ENCODE measurements at regions of chr13 and their contacts with region 1.

Region 1: GRCh38 chr13:51452361-51453206 is at the start of gene INTS6:
- DNase-seq: peak; percentile 99
- ATAC-seq: peak; percentile 78 to 94 (median 81)
- H3K4me3 ChIP-seq: peak within 1 kb of the TSS; percentile 85
- H3K4me3 Mint-ChIP-seq: peak within 1 kb of the TSS; percentile 94
- H3K27ac ChIP-seq: peak within 1 kb of the TSS; percentile 96
- H3K27ac Mint-ChIP-seq: peak within 1 kb of the TSS; percentile 92 to 96
- H3K4me1 ChIP-seq: peaks cover 9% of the 10 kb centered on the region
- H3K4me1 Mint-ChIP-seq: peaks cover 45 to 48% of the 10 kb centered on the region in 2 donors
- H3K27me3 ChIP-seq: no peaks in the 10 kb centered on the region
- H3K27me3 Mint-ChIP-seq: no peaks in the 10 kb centered on the region
- CTCF ChIP-seq: no peak
- total RNA-seq, gene INTS6: 89.2 to 142 (median 110) TPM

Region 2: GRCh38 chr13:51479199-51479523 is 26.6 kb after region 1 on chr13:
- intact Hi-C with region 1: no loop called
- DNase-seq: no peak
- ATAC-seq: no peak
- H3K4me3 ChIP-seq: no peak overlapping the region
- H3K4me3 Mint-ChIP-seq: no peak overlapping the region
- H3K27ac ChIP-seq: no peak overlapping the region
- H3K27ac Mint-ChIP-seq: no peak overlapping the region
- H3K4me1 ChIP-seq: no peaks in the 10 kb centered on the region
- H3K4me1 Mint-ChIP-seq: peaks cover 8 to 9% of the 10 kb centered on the region in 2 donors
- H3K27me3 ChIP-seq: no peaks in the 10 kb centered on the region
- H3K27me3 Mint-ChIP-seq: no peaks in the 10 kb centered on the region
- CTCF ChIP-seq: no peak

Region 3: GRCh38 chr13:51534041-51534817 is 81.6 kb after region 1 on chr13:
- intact Hi-C with region 1: loop called (anchors 5 kb)
- DNase-seq: peak; percentile 45 to 50
- ATAC-seq: peak; percentile 83 to 97 (median 86)
- H3K4me3 ChIP-seq: no peak overlapping the region
- H3K4me3 Mint-ChIP-seq: peak overlapping the region; percentile 78
- H3K27ac ChIP-seq: peak overlapping the region; percentile 60
- H3K27ac Mint-ChIP-seq: peak overlapping the region; percentile 83 to 87
- H3K4me1 ChIP-seq: peaks cover 24% of the 10 kb centered on the region
- H3K4me1 Mint-ChIP-seq: peaks cover 50 to 65% of the 10 kb centered on the region in 2 donors
- H3K27me3 ChIP-seq: no peaks in the 10 kb centered on the region
- H3K27me3 Mint-ChIP-seq: no peaks in the 10 kb centered on the region
- CTCF ChIP-seq: no peak

Region 4: GRCh38 chr13:51645154-51645650 is 192.6 kb after region 1 on chr13:
- intact Hi-C with region 1: loop called (anchors 1 kb)
- DNase-seq: peak; percentile 40 to 77
- ATAC-seq: peak; percentile 81 to 91 (median 84)
- H3K4me3 ChIP-seq: no peak overlapping the region
- H3K4me3 Mint-ChIP-seq: peak overlapping the region; percentile 61
- H3K27ac ChIP-seq: peak overlapping the region; percentile 86
- H3K27ac Mint-ChIP-seq: peak overlapping the region; percentile 96
- H3K4me1 ChIP-seq: peaks cover 27% of the 10 kb centered on the region
- H3K4me1 Mint-ChIP-seq: peaks cover 40 to 48% of the 10 kb centered on the region in 2 donors
- H3K27me3 ChIP-seq: no peaks in the 10 kb centered on the region
- H3K27me3 Mint-ChIP-seq: no peaks in the 10 kb centered on the region
- CTCF ChIP-seq: no peak

Region 5: GRCh38 chr13:52194184-52194868 is 741.7 kb after region 1 on chr13:
- intact Hi-C with region 1: loop called (anchors 10 kb)
- DNase-seq: peak; percentile 83 to 92
- ATAC-seq: peak; percentile 87 to 95 (median 89)
- H3K4me3 ChIP-seq: peak overlapping the region; percentile 74
- H3K4me3 Mint-ChIP-seq: peak overlapping the region; percentile 98
- H3K27ac ChIP-seq: peak overlapping the region; percentile 65
- H3K27ac Mint-ChIP-seq: peak overlapping the region; percentile 89 to 91
- H3K4me1 ChIP-seq: peaks cover 7% of the 10 kb centered on the region
- H3K4me1 Mint-ChIP-seq: peaks cover 19 to 23% of the 10 kb centered on the region in 2 donors
- H3K27me3 ChIP-seq: no peaks in the 10 kb centered on the region
- H3K27me3 Mint-ChIP-seq: no peaks in the 10 kb centered on the region
- CTCF ChIP-seq: no peak